ENCODE measurements at regions of chr19 and their contacts with region 1.

Region 1: DNA sequence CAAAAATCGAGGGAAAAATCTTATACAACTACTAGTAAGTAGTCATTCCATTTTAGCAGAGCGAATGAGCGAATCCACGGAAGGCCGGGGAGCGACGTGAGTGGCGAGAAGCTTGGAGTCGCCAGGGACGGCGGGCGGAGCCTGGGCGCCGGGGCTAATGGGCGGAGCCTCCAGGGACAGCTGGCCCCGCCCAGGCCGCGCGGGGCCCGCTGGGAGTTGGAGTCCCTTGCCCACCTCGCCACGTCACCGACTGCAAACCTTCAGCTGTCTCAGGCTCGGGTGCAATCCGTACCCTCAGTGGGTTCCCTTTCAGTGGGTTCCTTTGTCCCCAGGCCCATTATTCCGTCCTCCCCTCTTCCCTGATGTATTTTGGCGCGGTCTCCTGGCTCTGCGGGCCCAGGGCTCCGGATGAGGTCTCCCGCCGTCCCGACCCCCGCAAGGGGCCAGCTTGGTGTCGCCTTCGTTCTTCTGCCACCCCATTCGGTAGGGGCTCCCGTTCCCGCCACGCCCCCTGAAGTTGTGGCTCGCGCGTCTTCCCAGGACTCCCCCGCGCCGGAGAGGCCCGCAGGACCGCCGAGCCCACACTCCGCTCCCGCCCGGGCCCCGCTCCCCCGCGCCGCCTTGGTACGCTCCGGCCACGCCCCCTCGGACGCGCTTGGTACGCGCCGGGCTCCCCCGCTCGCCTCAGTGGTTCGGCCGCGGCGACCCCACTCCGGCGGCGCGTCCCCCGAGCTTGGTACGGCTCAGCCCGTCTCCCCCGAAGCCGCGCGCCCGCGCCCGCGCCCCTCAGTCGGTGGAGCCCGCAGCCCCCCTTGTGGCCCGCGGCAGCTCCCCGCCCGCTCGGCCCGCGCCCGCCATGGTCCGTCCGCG is at the start of gene PTOV1:
- DNase-seq: peak; percentile 92
- ATAC-seq: peak; percentile 79
- H3K4me3 Mint-ChIP-seq: peak within 1 kb of the TSS; percentile 87
- H3K27ac Mint-ChIP-seq: peak within 1 kb of the TSS; percentile 98
- H3K4me1 Mint-ChIP-seq: peaks cover 43% of the 10 kb centered on the region
- H3K27me3 Mint-ChIP-seq: peaks cover 9% of the 10 kb centered on the region
- total RNA-seq, gene PTOV1: 78.8 to 94.3 TPM

Region 2: DNA sequence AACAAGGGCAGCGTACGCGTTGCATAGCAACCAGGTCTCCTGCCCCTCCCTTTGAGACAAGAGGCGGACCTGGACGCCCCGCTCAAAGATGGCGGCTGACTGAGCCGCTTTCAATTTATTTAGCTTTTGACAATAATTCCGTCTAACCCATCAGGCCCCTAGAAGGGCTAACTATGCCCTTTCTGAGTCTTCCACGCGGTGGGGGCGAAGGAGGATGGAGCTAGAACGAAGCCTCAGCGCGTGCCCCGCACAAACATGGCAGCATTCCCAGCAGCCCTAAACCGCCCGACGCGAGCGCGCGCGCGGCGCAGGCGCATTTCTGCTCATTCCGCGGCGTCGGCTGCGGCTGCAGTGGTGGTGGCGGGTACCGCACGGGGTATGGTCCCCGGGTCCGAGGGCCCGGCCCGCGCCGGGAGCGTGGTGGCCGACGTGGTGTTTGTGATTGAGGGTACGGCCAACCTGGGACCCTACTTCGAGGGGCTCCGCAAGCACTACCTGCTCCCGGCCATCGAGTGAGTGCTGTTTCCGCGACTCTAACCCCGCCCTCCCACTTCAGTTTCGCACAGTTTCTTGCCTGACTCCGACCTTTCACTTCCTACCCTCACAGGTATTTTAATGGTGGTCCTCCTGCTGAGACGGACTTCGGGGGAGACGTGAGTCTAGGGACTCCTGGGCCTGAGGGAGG is 32.6 kb before region 1 on chr19 and contains the start of gene MED25:
- CTCF ChIA-PET with region 1: interaction called, 6 read pairs
- POLR2A ChIA-PET with region 1: interaction called, 12 read pairs
- DNase-seq: peak; percentile 88
- ATAC-seq: peak; percentile 62
- H3K4me3 Mint-ChIP-seq: peak within 1 kb of the TSS; percentile 88
- H3K27ac Mint-ChIP-seq: peak within 1 kb of the TSS; percentile 96
- H3K4me1 Mint-ChIP-seq: peaks cover 28% of the 10 kb centered on the region
- H3K27me3 Mint-ChIP-seq: peaks cover 2% of the 10 kb centered on the region
- total RNA-seq, gene MED25: 59.9 to 62.2 TPM

Region 3: DNA sequence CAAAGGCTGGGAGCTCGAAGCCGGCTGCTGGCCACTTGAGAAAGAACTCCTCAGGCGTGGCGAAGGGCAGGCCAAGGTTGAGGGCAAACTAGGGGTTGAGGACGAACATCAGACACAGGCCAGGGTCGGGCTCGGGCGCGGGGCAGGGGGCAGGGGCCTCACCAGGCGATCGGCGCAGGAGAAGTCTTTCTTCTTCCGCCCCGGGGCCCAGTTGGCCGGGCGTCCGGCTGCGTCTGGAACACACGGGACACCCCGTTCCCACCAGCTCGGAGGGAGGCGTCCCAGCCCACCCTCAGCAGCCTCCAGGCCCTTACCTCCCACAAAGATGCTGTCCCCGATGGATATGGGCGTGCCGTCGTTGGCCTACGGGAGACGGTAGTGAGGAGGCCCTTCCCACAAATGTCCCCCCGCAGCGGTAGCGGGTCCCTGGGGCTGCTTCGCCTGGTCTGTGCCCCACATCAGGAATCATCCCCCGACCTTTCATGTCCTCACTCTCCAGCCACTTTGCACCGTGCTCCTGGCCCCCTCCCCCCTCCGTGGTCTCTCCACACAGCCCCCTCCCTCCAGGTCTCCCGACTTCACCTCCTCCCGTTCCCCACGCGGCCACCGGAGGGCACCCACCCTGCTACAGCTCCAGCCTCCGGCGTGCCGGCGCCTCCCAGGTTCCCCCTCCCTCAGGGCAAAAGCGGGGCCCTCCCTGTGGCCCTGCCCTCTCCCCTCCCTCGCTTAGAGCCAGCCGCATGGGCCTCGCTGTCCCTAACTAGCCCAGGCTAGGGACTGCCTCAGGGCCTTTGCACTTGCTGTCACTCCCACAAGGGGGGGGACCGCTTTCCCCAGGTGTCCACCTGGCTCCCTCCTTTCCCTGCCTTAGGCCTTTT is 11.9 kb after region 1 on chr19:
- CTCF ChIA-PET with region 1: no interaction called
- POLR2A ChIA-PET with region 1: interaction called, 13 read pairs
- DNase-seq: no peak
- ATAC-seq: no peak
- H3K4me3 Mint-ChIP-seq: no peak overlapping the region
- H3K27ac Mint-ChIP-seq: no peak overlapping the region
- H3K4me1 Mint-ChIP-seq: peaks cover 28% of the 10 kb centered on the region
- H3K27me3 Mint-ChIP-seq: no peaks in the 10 kb centered on the region

Region 4: GRCh38 chr19:49869441-49870176 is 18.9 kb after region 1 on chr19:
- CTCF ChIA-PET with region 1: no interaction called
- POLR2A ChIA-PET with region 1: interaction called, 13 read pairs
- DNase-seq: peak; percentile 96
- ATAC-seq: peak; percentile 81
- H3K4me3 Mint-ChIP-seq: no peak overlapping the region
- H3K27ac Mint-ChIP-seq: no peak overlapping the region
- H3K4me1 Mint-ChIP-seq: peaks cover 47% of the 10 kb centered on the region
- H3K27me3 Mint-ChIP-seq: no peaks in the 10 kb centered on the region

Region 5: GRCh38 chr19:49877020-49877878 is 26.5 kb after region 1 on chr19 and contains the starts of genes AKT1S1 and TBC1D17:
- CTCF ChIA-PET with region 1: interaction called, 4 read pairs
- POLR2A ChIA-PET with region 1: interaction called, 12 read pairs
- DNase-seq: peak; percentile 99
- ATAC-seq: peak; percentile 75
- H3K4me3 Mint-ChIP-seq: no peak within 1 kb of the TSS
- H3K27ac Mint-ChIP-seq: no peak within 1 kb of the TSS
- H3K4me1 Mint-ChIP-seq: peaks cover 33% of the 10 kb centered on the region
- H3K27me3 Mint-ChIP-seq: no peaks in the 10 kb centered on the region
- total RNA-seq, gene AKT1S1: 15.6 to 16.4 TPM
- total RNA-seq, gene TBC1D17: 28.6 to 30.8 TPM